Prostate gland (tissue), 2 donors: ENCODE measurements at regions of chr4 and their contacts with region 1.

Region 1: GRCh38 chr4:73922766-73923630 is 53.8 kb downstream of the CXCL1 start:
- DNase-seq: no peak
- H3K4me3 ChIP-seq: no peak overlapping the region
- H3K27ac ChIP-seq: no peak overlapping the region
- H3K4me1 ChIP-seq: no peaks in the 10 kb centered on the region
- H3K27me3 ChIP-seq: no peaks in the 10 kb centered on the region
- CTCF ChIP-seq: peak in 3 of 4 experiments; percentile 22 to 57 (median 46)
- POLR2A ChIP-seq: no peak

Region 2: DNA sequence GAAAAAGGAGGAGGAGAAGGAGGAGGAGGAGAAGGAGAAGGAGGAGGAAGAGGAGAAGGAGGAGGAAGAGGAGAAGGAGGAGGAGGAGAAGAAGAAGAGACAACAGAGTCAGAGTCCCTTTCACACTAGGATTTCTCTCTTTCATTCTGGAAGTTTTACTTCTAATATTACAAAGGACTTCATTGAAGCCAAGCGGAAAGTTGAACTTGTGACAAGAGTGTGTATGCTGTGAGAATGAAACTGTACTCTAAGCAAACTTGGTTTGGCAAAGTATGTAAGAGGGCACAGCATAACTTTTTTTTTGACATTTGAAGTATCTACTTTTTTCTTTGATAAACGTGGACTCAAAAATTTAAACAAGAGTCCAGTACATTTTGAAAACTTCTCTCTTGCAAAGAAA is 134.6 kb before region 1 on chr4:
- intact Hi-C with region 1: no loop called
- DNase-seq: no peak
- H3K4me3 ChIP-seq: no peak overlapping the region
- H3K27ac ChIP-seq: no peak overlapping the region
- H3K4me1 ChIP-seq: no peaks in the 10 kb centered on the region
- H3K27me3 ChIP-seq: no peaks in the 10 kb centered on the region
- CTCF ChIP-seq: no peak
- POLR2A ChIP-seq: no peak

Region 3: GRCh38 chr4:73869130-73870050 is 53.6 kb before region 1 on chr4 and contains the start of gene CXCL1:
- intact Hi-C with region 1: no loop called
- DNase-seq: peak; percentile 13
- H3K4me3 ChIP-seq: peak within 1 kb of the TSS; percentile 49 to 50
- H3K27ac ChIP-seq: peak within 1 kb of the TSS; percentile 20 to 55
- H3K4me1 ChIP-seq: no peaks in the 10 kb centered on the region
- H3K27me3 ChIP-seq: no peaks in the 10 kb centered on the region
- CTCF ChIP-seq: no peak
- POLR2A ChIP-seq: no peak
- total RNA-seq, gene CXCL1: 0.74 to 37.1 TPM

Region 4: DNA sequence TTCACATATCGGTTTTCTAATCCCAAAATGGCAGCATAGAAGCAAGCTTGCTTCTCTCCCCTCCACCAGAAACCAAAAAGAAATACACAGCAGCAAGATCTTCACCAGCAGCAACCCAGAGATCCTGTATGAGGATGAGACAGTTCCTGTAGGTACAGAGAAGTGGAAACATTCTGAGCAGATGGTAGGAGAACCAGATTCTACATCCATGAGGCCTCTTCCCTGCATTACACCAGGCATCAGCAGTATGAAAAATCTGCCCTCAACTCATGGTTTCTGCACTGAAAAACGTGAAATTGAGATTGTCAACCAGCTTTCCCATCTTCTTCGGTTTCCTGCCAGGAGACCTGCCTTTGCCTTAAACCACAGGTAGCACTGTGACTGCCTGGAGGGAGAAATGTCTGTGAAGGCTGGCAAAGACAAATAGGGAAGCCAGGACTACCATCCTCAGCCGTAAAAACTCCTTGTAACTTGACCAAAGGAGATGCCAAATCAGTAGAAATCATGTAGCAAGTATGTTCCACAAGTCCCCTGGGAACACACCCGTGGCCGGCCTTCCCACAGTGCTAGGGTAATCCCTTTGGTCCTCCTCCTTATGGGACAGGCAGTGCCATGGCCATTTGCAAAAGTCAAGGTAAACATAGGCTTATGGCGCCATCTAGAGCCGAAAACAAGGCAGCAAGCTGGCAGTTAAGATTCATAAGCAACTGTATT is 210.9 kb after region 1 on chr4:
- intact Hi-C with region 1: loop called (anchors 10 kb)
- DNase-seq: peak; percentile 73
- H3K4me3 ChIP-seq: no peak overlapping the region
- H3K27ac ChIP-seq: no peak overlapping the region
- H3K4me1 ChIP-seq: no peaks in the 10 kb centered on the region
- H3K27me3 ChIP-seq: no peaks in the 10 kb centered on the region
- CTCF ChIP-seq: peak in 3 of 4 experiments; percentile 64 to 79 (median 77)
- POLR2A ChIP-seq: no peak